Left cardiac atrium (tissue), 4 donors: ENCODE measurements at regions of chr1 and their contacts with region 1.

Region 1: GRCh38 chr1:62407405-62408009 is 29.3 kb upstream of the USP1 start:
- DNase-seq: no peak
- ATAC-seq: peak; percentile 36 to 38

Region 2: DNA sequence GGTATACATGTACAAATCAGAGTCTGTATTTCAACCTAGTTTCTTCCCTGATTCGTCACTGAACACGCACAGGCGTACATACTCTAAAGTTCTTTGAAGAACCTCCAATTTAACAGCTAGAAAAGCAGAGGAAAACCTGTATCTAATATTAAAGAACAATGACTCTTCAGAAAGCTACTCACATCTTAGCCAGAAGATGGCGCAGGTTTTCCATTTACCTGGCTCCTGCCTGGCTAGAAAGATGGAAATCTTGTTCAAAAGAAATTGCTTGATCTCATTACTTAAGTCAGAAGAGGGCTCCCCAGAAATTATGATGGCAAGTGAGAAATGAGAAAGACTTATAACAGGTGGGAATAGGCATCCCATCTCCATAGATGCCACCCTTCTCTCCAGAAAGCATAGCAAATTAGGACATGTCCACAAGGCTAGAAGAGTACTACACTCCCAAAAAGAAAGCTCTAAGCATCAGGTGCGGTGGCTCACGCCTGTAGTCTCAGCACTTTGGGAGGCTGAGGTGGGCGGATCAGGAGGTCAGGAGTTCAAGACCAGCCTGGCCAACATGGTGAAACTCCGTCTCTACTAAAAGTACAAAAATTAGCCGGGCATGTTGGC is 231.8 kb before region 1 on chr1:
- intact Hi-C with region 1: loop called (anchors 1 to 2 kb)
- DNase-seq: no peak
- ATAC-seq: peak; percentile 23 to 41